Astrocyte of the cerebellum (primary cell): ENCODE measurements at regions of chr1 and their contacts with region 1.

Region 1: DNA sequence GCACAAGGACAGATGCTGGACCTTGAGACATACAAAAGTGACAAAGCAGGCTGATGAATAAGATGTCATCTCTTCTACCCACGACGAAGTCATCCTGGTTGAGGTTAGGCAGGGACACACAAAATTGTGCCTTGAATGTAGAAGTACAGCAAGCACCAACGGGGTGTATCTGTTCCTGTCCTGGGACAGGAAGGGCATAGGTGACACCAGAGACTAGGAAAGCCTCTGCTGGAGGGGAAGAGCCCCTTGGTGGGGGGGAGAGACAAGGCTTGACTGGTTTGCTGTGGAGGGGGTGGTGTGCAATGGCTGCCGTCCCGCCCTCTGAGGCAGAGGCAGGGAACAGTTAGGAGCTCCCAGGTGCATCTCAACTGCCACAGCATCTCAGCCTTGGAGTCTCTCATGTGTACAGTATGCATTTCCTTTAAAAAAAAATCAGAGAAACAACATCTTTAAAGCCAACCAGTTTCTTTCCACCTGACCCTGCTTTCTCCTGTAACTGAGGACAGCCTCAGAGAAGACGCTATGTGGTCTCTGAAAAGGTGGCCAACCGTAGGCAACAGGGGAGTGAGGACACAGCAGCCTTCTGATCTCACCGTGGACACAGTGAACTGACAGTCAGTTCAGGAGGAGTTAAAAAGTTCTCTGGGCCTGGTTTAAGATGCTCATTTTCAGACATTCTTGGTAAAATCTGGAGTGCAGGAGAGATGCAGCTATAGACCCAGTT is 17.7 kb upstream of the GFI1 start:
- DNase-seq: no peak
- H3K4me3 ChIP-seq: no peak overlapping the region
- CTCF ChIP-seq: no peak

Region 2: GRCh38 chr1:92473781-92474495 is 30.5 kb before region 1 on chr1:
- in situ Hi-C with region 1: loop called (anchors 5 kb)
- DNase-seq: no peak
- H3K4me3 ChIP-seq: no peak overlapping the region
- CTCF ChIP-seq: no peak

Region 3: DNA sequence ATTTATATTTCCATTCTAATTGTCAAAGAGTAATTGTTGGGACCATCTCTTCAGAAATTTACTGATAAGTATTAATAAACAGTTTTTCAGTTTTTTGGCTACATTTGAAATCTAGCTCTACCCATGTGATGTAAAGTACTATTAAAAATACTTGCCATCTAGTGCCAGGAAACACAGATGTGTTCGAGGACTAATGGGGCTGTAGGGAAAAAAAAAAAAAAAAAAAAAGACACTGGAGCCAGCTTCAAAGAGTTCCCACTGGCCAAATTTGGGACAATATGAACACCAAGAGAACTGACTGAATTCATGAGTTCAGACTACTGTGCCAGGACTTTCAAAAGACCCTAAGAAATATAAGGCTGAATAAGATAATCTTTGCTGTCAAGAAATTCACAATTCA is 47.5 kb after region 1 on chr1:
- in situ Hi-C with region 1: no loop called
- DNase-seq: no peak
- H3K4me3 ChIP-seq: no peak overlapping the region
- CTCF ChIP-seq: no peak

Region 4: DNA sequence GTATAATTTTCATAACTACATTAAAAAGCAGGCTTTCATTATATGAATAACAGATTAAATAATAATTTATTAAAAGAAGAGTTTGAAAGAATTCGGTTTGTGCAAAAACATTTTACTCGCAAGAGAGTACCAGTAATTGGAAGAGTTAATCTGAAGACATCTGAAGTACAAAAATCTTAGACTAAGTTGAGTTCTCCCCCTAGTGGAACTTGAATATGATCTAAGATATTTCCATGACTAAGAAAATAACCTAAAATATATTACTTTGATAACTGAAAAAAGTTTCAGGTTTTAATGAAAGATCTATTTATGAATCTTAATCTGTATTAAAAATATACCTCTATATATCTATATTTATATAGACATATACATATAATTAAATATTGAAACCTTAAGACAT is 94.7 kb after region 1 on chr1:
- in situ Hi-C with region 1: no loop called
- DNase-seq: peak; percentile 24
- H3K4me3 ChIP-seq: no peak overlapping the region
- CTCF ChIP-seq: no peak